ENCODE measurements at regions of chr17 and their contacts with region 1.

Region 1: GRCh38 chr17:7561028-7561575 is 617 bp upstream of the SENP3 start:
- DNase-seq: peak; percentile 83
- H3K4me3 Mint-ChIP-seq: peak overlapping the region; percentile 81
- H3K27ac Mint-ChIP-seq: peak overlapping the region; percentile 93
- H3K4me1 Mint-ChIP-seq: peaks cover 60% of the 10 kb centered on the region
- H3K27me3 Mint-ChIP-seq: no peaks in the 10 kb centered on the region

Region 2: DNA sequence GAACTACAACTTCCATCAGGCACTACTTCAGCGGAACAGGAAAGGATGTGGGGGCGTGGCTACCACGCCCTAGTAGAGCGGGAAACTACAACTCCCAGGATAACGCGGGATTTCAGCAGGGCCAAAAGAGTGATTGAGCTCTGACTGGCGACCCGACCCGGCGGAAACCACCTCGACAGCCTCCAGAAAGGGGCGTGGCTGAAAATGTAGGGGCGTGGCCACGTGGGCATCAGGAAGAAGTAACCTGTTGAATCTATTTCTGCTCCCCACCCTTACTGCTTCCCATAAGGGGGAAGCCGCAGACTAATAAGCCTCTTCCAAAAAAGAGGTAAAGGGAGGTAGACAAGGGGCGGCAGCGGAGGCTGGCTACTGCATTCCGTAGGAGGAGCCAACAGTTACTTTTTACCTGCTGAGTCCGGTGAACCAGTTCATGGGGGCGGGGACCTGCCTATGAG is 125.9 kb before region 1 on chr17 and contains the start of gene TMEM102:
- CTCF ChIA-PET with region 1: interaction called, 13 read pairs
- POLR2A ChIA-PET with region 1: interaction called, 4 read pairs
- DNase-seq: peak; percentile 98
- H3K4me3 Mint-ChIP-seq: peak within 1 kb of the TSS; percentile 87
- H3K27ac Mint-ChIP-seq: peak within 1 kb of the TSS; percentile 97
- H3K4me1 Mint-ChIP-seq: peaks cover 38% of the 10 kb centered on the region
- H3K27me3 Mint-ChIP-seq: peaks cover 10% of the 10 kb centered on the region
- total RNA-seq, gene TMEM102: 16.7 to 18.1 TPM

Region 3: GRCh38 chr17:7497636-7498035 is 63.5 kb before region 1 on chr17:
- CTCF ChIA-PET with region 1: no interaction called
- POLR2A ChIA-PET with region 1: no interaction called
- DNase-seq: no peak
- H3K4me3 Mint-ChIP-seq: no peak overlapping the region
- H3K27ac Mint-ChIP-seq: no peak overlapping the region
- H3K4me1 Mint-ChIP-seq: peaks cover 14% of the 10 kb centered on the region
- H3K27me3 Mint-ChIP-seq: no peaks in the 10 kb centered on the region

Region 4: GRCh38 chr17:7509937-7510336 is 51.2 kb before region 1 on chr17:
- CTCF ChIA-PET with region 1: interaction called, 38 read pairs
- POLR2A ChIA-PET with region 1: no interaction called
- DNase-seq: no peak
- H3K4me3 Mint-ChIP-seq: no peak overlapping the region
- H3K27ac Mint-ChIP-seq: no peak overlapping the region
- H3K4me1 Mint-ChIP-seq: peaks cover 4% of the 10 kb centered on the region
- H3K27me3 Mint-ChIP-seq: no peaks in the 10 kb centered on the region

Region 5: DNA sequence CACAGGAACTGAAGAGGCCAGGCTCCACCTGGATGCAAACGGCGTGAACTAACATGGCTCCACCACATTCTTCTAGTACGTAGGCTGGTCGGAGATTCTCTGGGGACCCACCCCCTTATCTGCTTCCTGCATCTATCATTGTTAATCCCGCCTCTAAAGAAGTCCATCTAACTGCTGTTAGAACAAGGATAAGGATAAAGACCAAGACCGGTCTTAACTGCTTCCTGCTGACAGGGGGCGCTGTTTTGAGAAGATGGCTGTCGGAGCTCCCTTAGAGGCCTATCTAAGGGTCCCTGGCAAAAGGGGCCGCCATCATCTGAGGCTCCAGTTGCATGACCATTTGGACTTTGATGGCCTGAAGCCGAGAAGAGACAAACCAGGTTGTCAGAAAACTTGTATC is 38.1 kb before region 1 on chr17:
- CTCF ChIA-PET with region 1: interaction called, 16 read pairs
- POLR2A ChIA-PET with region 1: no interaction called
- DNase-seq: peak; percentile 48
- H3K4me3 Mint-ChIP-seq: no peak overlapping the region
- H3K27ac Mint-ChIP-seq: no peak overlapping the region
- H3K4me1 Mint-ChIP-seq: peaks cover 5% of the 10 kb centered on the region
- H3K27me3 Mint-ChIP-seq: peaks cover 1% of the 10 kb centered on the region

Region 6: DNA sequence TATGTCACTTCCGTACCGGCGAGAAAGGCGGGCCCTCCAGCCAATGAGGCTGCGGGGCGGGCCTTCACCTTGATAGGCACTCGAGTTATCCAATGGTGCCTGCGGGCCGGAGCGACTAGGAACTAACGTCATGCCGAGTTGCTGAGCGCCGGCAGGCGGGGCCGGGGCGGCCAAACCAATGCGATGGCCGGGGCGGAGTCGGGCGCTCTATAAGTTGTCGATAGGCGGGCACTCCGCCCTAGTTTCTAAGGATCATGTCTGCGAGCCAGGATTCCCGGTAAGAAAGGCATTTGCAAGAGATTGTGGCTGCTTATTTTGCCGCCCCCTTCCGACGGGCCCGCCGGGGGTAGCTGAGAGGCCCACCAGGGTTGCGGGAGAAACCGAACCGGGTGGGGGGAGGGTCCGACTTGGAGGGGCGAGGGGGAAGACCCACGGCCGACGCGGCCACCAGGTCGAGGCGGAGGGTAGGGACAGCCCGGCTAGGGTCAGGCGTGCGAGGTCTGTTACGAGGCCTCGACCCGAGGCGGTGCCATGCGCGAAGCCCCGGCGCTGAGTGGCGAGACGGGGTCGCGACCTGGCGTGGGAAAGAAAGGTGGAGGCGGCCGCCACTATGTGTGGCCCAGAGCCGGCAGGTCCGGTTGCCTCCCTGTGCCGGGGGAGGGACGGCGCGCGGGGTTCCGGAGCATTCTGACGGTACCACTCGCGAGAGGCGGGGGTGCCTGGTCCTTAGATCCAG is 11.7 kb after region 1 on chr17:
- CTCF ChIA-PET with region 1: interaction called, 23 read pairs
- POLR2A ChIA-PET with region 1: interaction called, 3 read pairs
- DNase-seq: no peak
- H3K4me3 Mint-ChIP-seq: peak overlapping the region; percentile 92
- H3K27ac Mint-ChIP-seq: peak overlapping the region; percentile 98
- H3K4me1 Mint-ChIP-seq: peaks cover 58% of the 10 kb centered on the region
- H3K27me3 Mint-ChIP-seq: no peaks in the 10 kb centered on the region

Region 7: DNA sequence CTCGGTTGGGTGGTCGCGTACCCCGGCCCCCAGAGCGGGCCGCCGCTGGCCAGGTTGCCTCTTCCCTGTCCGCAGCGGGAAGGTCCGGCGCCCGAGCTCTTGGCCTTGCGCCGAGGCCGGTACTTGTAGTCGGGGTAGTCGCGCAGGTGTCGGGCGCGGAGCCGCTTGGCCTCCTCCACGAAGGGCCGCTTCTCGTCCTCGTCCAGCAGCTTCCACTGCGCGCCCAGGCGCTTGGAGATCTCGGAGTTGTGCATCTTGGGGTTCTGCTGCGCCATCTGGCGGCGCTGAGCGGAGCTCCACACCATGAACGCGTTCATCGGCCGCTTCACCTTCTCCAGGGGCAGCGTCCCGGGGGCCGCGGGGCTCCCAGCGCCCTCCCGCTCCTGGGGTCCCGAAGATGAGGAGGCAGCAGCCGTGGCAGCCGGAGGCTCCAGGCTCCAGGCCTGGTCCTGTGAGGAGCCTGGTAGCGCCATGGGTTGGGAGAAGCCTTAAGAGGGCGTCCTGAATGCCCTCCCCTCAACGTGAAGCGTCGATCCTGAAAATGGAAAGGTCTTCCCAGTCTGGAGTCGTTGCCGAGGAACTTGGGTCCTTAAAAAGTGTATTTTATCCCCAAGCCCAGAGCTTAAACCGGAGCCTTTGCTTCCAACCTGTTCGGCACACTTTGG is 28.2 kb after region 1 on chr17:
- CTCF ChIA-PET with region 1: interaction called, 11 read pairs
- POLR2A ChIA-PET with region 1: no interaction called
- DNase-seq: peak; percentile 74
- H3K4me3 Mint-ChIP-seq: no peak overlapping the region
- H3K27ac Mint-ChIP-seq: no peak overlapping the region
- H3K4me1 Mint-ChIP-seq: peaks cover 19% of the 10 kb centered on the region
- H3K27me3 Mint-ChIP-seq: no peaks in the 10 kb centered on the region

Measured in activated CD4-positive, alpha-beta T cell treated with anti-CD3 and anti-CD28 coated beads, Interleukin-2, amount 10 ng/mL, durations not matched to agents 7 days and 5 days (primary cell).